Esophagus muscularis mucosa (tissue), 4 donors: ENCODE measurements at regions of chr2 and their contacts with region 1.

Region 1: DNA sequence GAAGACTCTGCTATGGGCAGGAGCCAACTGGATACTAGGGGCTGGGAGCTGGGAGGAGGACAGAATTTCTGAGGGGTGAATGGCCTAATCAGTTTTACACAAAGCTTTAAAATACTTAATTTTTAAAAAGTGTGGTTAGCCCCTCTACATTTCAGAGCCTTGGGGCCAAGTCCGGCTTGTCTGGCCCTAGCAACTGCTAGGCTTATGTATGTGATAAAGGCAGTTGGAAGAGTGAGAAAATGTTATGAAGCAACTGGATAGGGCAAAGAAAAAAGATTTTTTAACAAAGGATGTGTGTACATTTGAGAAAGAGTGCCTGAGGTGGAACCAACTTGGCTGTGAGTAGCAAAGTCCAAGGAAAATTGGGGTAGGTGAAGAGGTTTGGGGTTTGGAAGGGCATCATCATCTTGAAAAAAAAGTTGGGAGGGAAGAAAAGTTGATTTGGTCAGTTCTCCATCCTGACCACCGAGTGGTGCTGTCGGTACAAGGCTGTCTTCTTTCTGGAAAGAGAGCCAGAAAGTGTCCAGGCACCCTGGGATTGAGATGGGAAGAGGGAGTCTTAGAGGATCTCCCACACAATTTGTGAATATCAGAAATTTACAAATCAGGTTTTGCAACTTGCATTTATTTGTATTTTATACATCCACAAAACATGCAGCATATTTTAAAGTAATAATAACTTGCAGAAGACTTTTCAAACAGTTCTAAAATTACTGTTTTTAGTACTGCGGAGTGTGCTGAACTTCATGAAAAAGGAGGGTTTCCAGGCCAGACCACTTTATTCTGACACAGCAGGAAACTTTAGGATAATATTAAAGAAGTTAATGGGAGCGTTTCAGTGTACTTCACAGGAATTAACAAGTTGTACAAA is 10.5 kb upstream of the CDK15 start:
- DNase-seq: no peak
- H3K4me3 ChIP-seq: no peak overlapping the region
- H3K27ac ChIP-seq: no peak overlapping the region
- H3K4me1 ChIP-seq: no peaks in the 10 kb centered on the region
- H3K27me3 ChIP-seq: no peaks in the 10 kb centered on the region
- CTCF ChIP-seq: peak; percentile 62 to 67 (median 63)
- EP300 ChIP-seq: no peak
- POLR2A ChIP-seq: no peak

Region 2: GRCh38 chr2:202178342-202178958 is 382.6 kb after region 1 on chr2:
- intact Hi-C with region 1: loop called (anchors 2 kb)
- DNase-seq: no peak
- H3K4me3 ChIP-seq: no peak overlapping the region
- H3K27ac ChIP-seq: no peak overlapping the region
- H3K4me1 ChIP-seq: no peaks in the 10 kb centered on the region
- H3K27me3 ChIP-seq: no peaks in the 10 kb centered on the region
- CTCF ChIP-seq: peak; percentile 81 to 87 (median 85)
- EP300 ChIP-seq: no peak
- POLR2A ChIP-seq: no peak